IMR-90 (cell line): ENCODE measurements at regions of chr1 and their contacts with region 1.

Region 1: DNA sequence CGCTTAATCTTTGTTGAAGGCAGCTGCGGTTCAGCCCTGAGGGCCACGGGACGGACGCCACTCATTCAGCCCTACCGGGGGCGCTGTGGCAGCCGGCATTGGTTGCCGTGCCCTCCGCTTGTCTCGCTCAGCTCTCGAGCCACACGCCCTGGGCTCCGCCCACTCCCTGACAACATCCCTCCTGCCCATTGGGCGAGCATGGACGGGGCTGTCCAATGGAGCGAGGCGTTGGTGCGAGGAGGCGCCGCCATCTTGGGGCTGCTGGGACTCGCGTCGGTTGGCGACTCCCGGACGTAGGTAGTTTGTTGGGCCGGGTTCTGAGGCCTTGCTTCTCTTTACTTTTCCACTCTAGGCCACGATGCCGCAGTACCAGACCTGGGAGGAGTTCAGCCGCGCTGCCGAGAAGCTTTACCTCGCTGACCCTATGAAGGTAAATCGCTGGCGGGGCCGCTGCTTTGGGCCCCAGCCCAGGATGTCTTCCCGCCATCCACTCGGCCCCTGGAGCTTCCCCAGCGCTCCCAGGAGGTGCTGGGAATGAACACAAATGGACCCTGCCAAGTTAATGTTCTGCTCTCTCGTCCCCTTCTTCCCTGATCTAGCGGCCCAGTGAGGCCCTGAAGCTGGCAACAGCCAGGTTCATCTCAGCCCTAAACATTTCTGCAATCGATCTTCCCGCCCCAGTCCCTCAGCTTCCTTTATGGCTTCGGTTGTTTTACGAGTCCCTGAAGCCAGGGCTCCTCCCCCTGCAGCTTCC is at the start of gene SRP9:
- DNase-seq: peak; percentile 98
- ATAC-seq: peak; percentile 98
- H3K4me3 ChIP-seq: peak within 1 kb of the TSS; percentile 88
- H3K27ac ChIP-seq: peak within 1 kb of the TSS; percentile 96
- H3K4me1 ChIP-seq: peaks cover 2% of the 10 kb centered on the region; the same call in 1 of the 2 replicates
- H3K27me3 ChIP-seq: no peaks in the 10 kb centered on the region
- CTCF ChIP-seq: peak; percentile 94
- POLR2A ChIP-seq: peak; percentile 76
- RAD21 ChIP-seq: peak; percentile 79
- total RNA-seq, gene SRP9: 230 and 484 TPM in 2 replicates

Region 2: GRCh38 chr1:225454733-225455132 is 323.0 kb before region 1 on chr1:
- CTCF ChIA-PET with region 1: no interaction called
- POLR2A ChIA-PET with region 1: no interaction called
- dilution Hi-C with region 1: no loop called
- in situ Hi-C with region 1: no loop called
- intact Hi-C with region 1: no loop called
- DNase-seq: peak; percentile 89
- ATAC-seq: peak; percentile 66
- H3K4me3 ChIP-seq: no peak overlapping the region
- H3K27ac ChIP-seq: no peak overlapping the region
- H3K4me1 ChIP-seq: peaks cover 6% of the 10 kb centered on the region
- H3K27me3 ChIP-seq: no peaks in the 10 kb centered on the region
- CTCF ChIP-seq: no peak
- POLR2A ChIP-seq: no peak
- RAD21 ChIP-seq: no peak

Region 3: DNA sequence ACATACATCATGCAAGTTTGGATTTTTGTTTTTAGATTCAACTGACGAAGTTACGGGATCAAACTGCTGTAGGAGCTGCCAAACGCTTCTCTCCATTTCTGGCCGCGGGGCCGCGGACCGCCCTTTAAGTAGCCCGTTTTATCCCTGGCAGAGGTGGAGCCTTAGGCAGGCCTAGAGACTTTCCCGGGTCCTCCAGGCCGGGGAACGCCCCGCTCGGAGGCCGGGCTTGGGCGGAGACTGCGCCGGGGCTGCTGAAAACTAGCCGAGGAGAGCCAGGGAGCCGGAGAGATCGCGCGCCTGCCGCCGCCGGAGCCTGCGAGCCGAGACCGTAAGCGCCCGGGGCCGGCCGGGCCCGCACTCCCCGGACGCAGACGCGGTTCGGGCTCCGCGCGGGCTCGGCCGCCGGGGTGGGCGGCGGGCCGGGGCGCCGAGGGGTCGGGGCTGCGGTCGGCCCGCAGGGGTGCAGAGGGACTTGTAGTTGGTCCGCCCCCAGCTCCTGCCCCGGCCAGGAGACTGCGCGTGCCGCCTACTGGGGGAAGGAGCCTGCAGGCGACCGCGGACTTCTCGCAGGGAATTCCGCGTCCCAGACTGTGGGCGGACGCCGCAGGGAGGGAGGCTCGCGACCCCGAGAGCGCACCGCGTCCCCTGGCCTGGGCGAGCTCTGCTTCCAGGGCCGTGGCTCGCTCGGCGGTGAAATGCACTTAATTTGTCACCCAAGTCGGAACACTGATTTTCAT is 32.2 kb after region 1 on chr1 and contains the start of gene EPHX1:
- CTCF ChIA-PET with region 1: no interaction called
- POLR2A ChIA-PET with region 1: no interaction called
- dilution Hi-C with region 1: no loop called
- in situ Hi-C with region 1: no loop called
- intact Hi-C with region 1: loop called (anchors 2 kb)
- DNase-seq: peak; percentile 84
- ATAC-seq: peak; percentile 98
- H3K4me3 ChIP-seq: peak within 1 kb of the TSS; percentile 87
- H3K27ac ChIP-seq: peak within 1 kb of the TSS; percentile 21
- H3K4me1 ChIP-seq: peaks cover 20% of the 10 kb centered on the region
- H3K27me3 ChIP-seq: no peaks in the 10 kb centered on the region
- CTCF ChIP-seq: peak; percentile 40
- POLR2A ChIP-seq: peak; percentile 85
- RAD21 ChIP-seq: peak; percentile 24; the same call in 1 of the 2 replicates
- total RNA-seq, gene EPHX1: 16.9 and 20.3 TPM in 2 replicates

Region 4: GRCh38 chr1:225845571-225846259 is 68.0 kb after region 1 on chr1:
- CTCF ChIA-PET with region 1: no interaction called
- POLR2A ChIA-PET with region 1: no interaction called
- dilution Hi-C with region 1: no loop called
- in situ Hi-C with region 1: no loop called
- intact Hi-C with region 1: loop called (anchors 5 kb)
- DNase-seq: peak; percentile 75
- ATAC-seq: peak; percentile 86
- H3K4me3 ChIP-seq: no peak overlapping the region
- H3K27ac ChIP-seq: no peak overlapping the region
- H3K4me1 ChIP-seq: peaks cover 3% of the 10 kb centered on the region; the same call in 1 of the 2 replicates
- H3K27me3 ChIP-seq: no peaks in the 10 kb centered on the region
- CTCF ChIP-seq: peak; percentile 89
- POLR2A ChIP-seq: 0 out of 2 replicates have a peak, but pooled peaks have one; percentile 54
- RAD21 ChIP-seq: peak; percentile 93

Region 5: DNA sequence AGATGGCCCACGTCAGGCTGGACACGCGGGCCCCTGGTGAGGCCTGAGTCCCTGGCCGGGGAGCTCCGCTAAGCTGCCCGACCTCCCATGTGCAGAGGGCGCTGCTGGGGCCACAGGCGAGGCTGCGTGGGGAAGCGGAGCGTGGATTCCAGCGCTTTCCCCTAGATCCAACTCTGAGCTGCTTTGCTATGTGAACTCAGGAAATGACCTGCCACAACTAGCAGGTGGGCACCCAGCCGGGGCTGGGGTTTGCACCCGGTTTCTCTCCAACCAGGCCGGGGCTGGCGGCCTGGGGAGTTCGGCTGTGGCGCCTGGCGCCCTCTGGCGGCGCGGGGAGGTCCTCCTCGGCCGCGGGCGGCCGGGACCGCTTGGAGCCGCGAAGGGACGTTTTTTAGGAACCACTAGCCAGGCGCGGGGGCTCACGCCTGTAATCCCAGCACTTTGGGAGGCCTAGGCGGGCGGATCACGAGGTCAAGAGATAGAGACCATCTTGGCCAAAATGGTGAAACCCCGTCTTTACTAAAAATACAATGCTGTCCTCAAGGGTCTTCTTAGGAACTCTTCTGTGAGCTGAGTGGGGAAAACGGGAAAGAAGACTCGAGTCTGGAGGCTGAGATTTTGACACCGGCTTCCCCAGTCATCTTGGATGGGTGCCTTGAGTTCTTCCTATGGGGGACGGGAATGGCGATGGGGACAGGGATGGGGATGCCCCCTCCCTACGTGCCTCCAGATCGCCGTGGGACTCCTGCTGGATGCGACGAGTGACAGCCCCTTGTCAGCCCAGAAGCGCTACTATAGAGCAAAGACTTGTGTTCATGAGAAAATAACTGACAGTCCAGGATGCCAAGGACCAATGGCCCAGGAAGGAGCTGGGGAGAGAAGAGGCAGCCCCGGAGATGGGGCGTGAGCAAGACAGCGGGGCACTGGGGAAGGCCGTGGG is 133.7 kb after region 1 on chr1:
- CTCF ChIA-PET with region 1: interaction called, 3 read pairs
- POLR2A ChIA-PET with region 1: no interaction called
- dilution Hi-C with region 1: no loop called
- in situ Hi-C with region 1: no loop called
- intact Hi-C with region 1: loop called (anchors 1 kb)
- DNase-seq: peak; percentile 17
- ATAC-seq: peak; percentile 95
- H3K4me3 ChIP-seq: no peak overlapping the region
- H3K27ac ChIP-seq: no peak overlapping the region
- H3K4me1 ChIP-seq: peaks cover 1% of the 10 kb centered on the region; the same call in 1 of the 2 replicates
- H3K27me3 ChIP-seq: no peaks in the 10 kb centered on the region
- CTCF ChIP-seq: peak; percentile 70
- POLR2A ChIP-seq: no peak
- RAD21 ChIP-seq: peak; percentile 74